ENCODE measurements at regions of chr15 and their contacts with region 1.

Region 1: GRCh38 chr15:80090879-80091503 is 31.5 kb downstream of the ZFAND6 start:
- DNase-seq: peak; percentile 58 to 77 (median 62)
- H3K4me3 ChIP-seq: no peak overlapping the region
- H3K27ac ChIP-seq: peak overlapping the region in 1 of 2 experiments; percentile 2
- H3K4me1 ChIP-seq: peaks cover 0 to 42% (median 3%) of the 10 kb centered on the region in 4 experiments
- H3K27me3 ChIP-seq: no peaks in the 10 kb centered on the region

Region 2: DNA sequence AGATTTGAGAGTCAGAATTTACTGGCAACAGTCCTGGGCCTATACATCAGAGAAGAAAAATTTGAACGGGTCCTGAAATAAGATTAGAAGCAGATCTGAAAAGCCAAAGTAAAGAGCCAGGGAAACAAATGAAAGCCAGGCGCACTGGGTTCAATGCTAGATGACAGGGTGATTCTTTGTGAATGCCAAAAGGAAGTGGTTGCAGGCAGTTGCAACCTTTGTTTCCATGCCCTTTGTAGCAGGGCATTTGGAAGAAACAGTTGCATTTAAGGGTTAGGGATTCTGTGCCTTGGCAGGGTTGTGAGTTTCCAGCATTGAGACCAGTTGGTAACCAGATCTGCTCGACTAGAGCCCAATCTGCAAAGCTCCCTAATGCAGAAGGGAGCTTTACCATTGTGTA is 157.8 kb before region 1 on chr15:
- CTCF ChIA-PET with region 1: no interaction called
- POLR2A ChIA-PET with region 1: no interaction called
- DNase-seq: no peak
- H3K4me3 ChIP-seq: no peak overlapping the region
- H3K27ac ChIP-seq: no peak overlapping the region
- H3K4me1 ChIP-seq: peaks cover 0 to 5% (median 2%) of the 10 kb centered on the region in 4 experiments
- H3K27me3 ChIP-seq: no peaks in the 10 kb centered on the region

Region 3: GRCh38 chr15:80072285-80072994 is 18.6 kb before region 1 on chr15:
- CTCF ChIA-PET with region 1: interaction called, 12 read pairs
- POLR2A ChIA-PET with region 1: interaction called, 3 read pairs
- DNase-seq: peak; percentile 85 to 90 (median 87)
- H3K4me3 ChIP-seq: peak overlapping the region in 6 of 7 experiments; percentile 61 to 95 (median 72)
- H3K27ac ChIP-seq: peak overlapping the region; percentile 23 to 75
- H3K4me1 ChIP-seq: peaks cover 6 to 59% (median 32%) of the 10 kb centered on the region in 4 experiments
- H3K27me3 ChIP-seq: no peaks in the 10 kb centered on the region

Region 4: GRCh38 chr15:80105595-80106450 is 14.8 kb after region 1 on chr15:
- CTCF ChIA-PET with region 1: interaction called, 12 read pairs
- POLR2A ChIA-PET with region 1: interaction called, 3 read pairs
- DNase-seq: peak in 1 of 3 donors; percentile 32
- H3K4me3 ChIP-seq: no peak overlapping the region
- H3K27ac ChIP-seq: no peak overlapping the region
- H3K4me1 ChIP-seq: peaks cover 2 to 10% (median 6%) of the 10 kb centered on the region in 4 experiments
- H3K27me3 ChIP-seq: no peaks in the 10 kb centered on the region

Measured in common myeloid progenitor, CD34-positive (primary cell).